OCI-LY7 (cell line): ENCODE measurements at regions of chr2 and their contacts with region 1.

Region 1: DNA sequence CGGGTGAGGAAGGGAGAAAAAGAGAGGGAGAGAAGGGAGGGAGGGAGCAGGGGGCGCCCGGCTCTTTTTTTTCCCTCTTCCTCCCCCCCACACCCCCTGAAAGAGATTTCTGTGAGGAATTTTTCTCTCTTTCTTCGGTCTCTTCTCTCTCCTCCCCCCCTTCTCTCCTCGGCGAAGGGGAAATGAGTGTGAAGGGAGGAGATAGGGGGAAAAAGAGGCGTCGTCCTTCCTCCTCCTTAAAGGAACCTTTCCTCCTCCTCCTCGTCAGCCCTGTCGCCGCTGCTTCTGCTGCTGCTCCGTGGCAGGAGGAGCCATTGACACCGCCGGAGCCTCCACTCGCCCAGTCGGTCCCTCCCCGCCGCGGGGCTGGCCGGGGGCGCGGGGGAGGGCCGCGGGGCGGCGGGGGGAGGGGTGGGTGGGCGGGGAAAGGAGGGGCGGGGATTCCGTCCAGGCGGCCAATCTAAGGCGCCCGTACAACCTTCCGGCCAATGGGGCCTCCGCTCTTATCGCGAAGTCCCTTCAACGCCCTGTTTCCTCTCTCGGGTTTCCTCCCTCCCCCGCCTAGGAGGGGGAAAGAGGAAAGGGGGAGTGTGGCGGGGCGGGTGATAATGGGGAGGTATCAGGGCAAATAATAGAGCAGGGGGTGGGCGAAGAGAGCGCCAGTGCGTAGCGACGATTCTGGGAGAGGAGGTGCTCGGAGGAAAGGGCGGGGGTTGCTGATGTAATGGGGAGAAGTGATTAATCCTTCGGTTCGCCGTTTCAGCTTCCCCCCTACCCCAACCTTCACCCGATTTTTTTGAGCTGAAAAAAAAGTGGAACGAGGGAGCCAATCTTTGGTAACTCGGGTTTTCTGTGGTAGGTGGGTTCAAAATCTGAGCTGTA is at the start of gene FBXO11:
- DNase-seq: peak; percentile 99
- H3K4me3 ChIP-seq: peak within 1 kb of the TSS; percentile 93
- H3K27ac ChIP-seq: peak within 1 kb of the TSS; percentile 95
- H3K4me1 ChIP-seq: peaks cover 31% of the 10 kb centered on the region
- CTCF ChIP-seq: no peak; the same call in 1 of the 2 replicates
- total RNA-seq, gene FBXO11: 24.7 and 31.9 TPM in 2 replicates

Region 2: GRCh38 chr2:46984642-46985476 is 921.5 kb before region 1 on chr2:
- CTCF ChIA-PET with region 1: no interaction called
- POLR2A ChIA-PET with region 1: no interaction called
- intact Hi-C with region 1: loop called (anchors 5 kb)
- DNase-seq: peak; percentile 72
- H3K4me3 ChIP-seq: peak overlapping the region; percentile 61
- H3K27ac ChIP-seq: peak overlapping the region; percentile 99
- H3K4me1 ChIP-seq: peaks cover 87% of the 10 kb centered on the region
- CTCF ChIP-seq: no peak

Region 3: DNA sequence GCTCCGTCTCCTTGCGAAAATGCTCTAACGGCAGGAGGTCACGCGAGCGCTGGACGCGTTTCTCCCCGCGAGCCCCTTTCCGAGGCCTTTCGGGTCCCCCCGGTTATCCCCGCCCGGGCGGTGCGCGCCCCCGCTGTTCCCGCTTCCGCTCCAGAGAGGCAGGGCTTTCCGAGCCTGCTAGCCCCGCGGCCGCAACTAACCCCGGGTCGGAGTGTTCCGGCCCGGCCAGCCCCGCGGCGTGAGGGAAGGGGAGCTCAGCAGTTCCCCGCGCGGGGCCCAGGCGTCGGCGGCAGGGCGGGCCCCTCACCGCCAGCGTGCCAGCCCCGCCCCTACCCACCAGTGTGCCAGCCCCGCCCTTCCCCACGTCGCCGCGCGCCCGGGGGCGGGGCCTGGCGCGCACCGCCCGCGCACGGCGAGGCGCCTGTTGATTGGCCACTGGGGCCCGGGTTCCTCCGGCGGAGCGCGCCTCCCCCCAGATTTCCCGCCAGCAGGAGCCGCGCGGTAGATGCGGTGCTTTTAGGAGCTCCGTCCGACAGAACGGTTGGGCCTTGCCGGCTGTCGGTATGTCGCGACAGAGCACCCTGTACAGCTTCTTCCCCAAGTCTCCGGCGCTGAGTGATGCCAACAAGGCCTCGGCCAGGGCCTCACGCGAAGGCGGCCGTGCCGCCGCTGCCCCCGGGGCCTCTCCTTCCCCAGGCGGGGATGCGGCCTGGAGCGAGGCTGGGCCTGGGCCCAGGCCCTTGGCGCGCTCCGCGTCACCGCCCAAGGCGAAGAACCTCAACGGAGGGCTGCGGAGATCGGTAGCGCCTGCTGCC is 123.5 kb before region 1 on chr2 and contains the start of gene MSH6:
- CTCF ChIA-PET with region 1: no interaction called
- POLR2A ChIA-PET with region 1: no interaction called
- intact Hi-C with region 1: loop called (anchors 10 kb)
- DNase-seq: peak; percentile 93
- H3K4me3 ChIP-seq: peak within 1 kb of the TSS; percentile 100
- H3K27ac ChIP-seq: peak within 1 kb of the TSS; percentile 93
- H3K4me1 ChIP-seq: peaks cover 54% of the 10 kb centered on the region
- CTCF ChIP-seq: no peak; the same call in 1 of the 2 replicates
- total RNA-seq, gene MSH6: 291 and 303 TPM in 2 replicates

Region 4: GRCh38 chr2:47862949-47863348 is 43.4 kb before region 1 on chr2:
- CTCF ChIA-PET with region 1: interaction called, 3 read pairs
- POLR2A ChIA-PET with region 1: interaction called, 7 read pairs
- intact Hi-C with region 1: loop called (anchors 5 kb)
- DNase-seq: no peak
- H3K4me3 ChIP-seq: no peak overlapping the region
- H3K27ac ChIP-seq: no peak overlapping the region
- H3K4me1 ChIP-seq: peaks cover 30% of the 10 kb centered on the region
- CTCF ChIP-seq: no peak

Region 5: GRCh38 chr2:48161628-48162027 is 255.2 kb after region 1 on chr2:
- CTCF ChIA-PET with region 1: no interaction called
- POLR2A ChIA-PET with region 1: no interaction called
- intact Hi-C with region 1: no loop called
- DNase-seq: no peak
- H3K4me3 ChIP-seq: no peak overlapping the region
- H3K27ac ChIP-seq: no peak overlapping the region
- H3K4me1 ChIP-seq: no peaks in the 10 kb centered on the region
- CTCF ChIP-seq: no peak

Region 6: DNA sequence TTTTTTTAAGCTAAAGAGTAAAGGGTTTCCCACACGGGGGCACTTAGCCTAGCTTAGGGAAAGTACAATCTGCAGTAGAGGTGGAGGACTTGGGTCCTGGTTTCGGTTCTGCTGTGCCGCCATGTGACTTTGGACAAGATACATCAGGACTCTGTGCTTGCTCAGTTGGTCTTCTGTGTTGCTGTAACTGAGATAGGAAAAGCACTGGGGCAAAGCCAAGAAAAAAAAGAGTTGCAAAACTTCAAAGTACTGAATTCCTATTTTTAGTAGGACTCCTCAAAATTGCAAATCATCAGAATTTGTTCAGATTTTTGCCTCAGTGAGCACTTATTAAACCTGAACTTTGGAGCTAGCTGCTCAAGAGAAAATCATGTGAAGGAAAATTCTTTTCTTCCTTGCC is 527.3 kb after region 1 on chr2:
- CTCF ChIA-PET with region 1: no interaction called
- POLR2A ChIA-PET with region 1: no interaction called
- intact Hi-C with region 1: loop called (anchors 10 kb)
- DNase-seq: peak; percentile 50
- H3K4me3 ChIP-seq: no peak overlapping the region
- H3K27ac ChIP-seq: no peak overlapping the region
- H3K4me1 ChIP-seq: peaks cover 19% of the 10 kb centered on the region
- CTCF ChIP-seq: peak; percentile 34; the same call in 1 of the 2 replicates